Mammary epithelial cell (primary cell): ENCODE measurements at regions of chr2 and their contacts with region 1.

Region 1: GRCh38 chr2:187541086-187542085 is 12.8 kb downstream of the TFPI start:
- DNase-seq: no peak
- H3K4me3 ChIP-seq: no peak overlapping the region
- H3K27ac ChIP-seq: peak overlapping the region; percentile 11
- H3K4me1 ChIP-seq: peaks cover 11% of the 10 kb centered on the region
- H3K27me3 ChIP-seq: no peaks in the 10 kb centered on the region
- CTCF ChIP-seq: no peak

Region 2: GRCh38 chr2:186365406-186365805 is 1176.0 kb before region 1 on chr2:
- CTCF ChIA-PET with region 1: no interaction called
- dilution Hi-C with region 1: no loop called
- in situ Hi-C with region 1: no loop called
- intact Hi-C with region 1: no loop called
- DNase-seq: no peak
- H3K4me3 ChIP-seq: no peak overlapping the region
- H3K27ac ChIP-seq: no peak overlapping the region
- H3K4me1 ChIP-seq: no peaks in the 10 kb centered on the region
- H3K27me3 ChIP-seq: no peaks in the 10 kb centered on the region
- CTCF ChIP-seq: no peak

Region 3: DNA sequence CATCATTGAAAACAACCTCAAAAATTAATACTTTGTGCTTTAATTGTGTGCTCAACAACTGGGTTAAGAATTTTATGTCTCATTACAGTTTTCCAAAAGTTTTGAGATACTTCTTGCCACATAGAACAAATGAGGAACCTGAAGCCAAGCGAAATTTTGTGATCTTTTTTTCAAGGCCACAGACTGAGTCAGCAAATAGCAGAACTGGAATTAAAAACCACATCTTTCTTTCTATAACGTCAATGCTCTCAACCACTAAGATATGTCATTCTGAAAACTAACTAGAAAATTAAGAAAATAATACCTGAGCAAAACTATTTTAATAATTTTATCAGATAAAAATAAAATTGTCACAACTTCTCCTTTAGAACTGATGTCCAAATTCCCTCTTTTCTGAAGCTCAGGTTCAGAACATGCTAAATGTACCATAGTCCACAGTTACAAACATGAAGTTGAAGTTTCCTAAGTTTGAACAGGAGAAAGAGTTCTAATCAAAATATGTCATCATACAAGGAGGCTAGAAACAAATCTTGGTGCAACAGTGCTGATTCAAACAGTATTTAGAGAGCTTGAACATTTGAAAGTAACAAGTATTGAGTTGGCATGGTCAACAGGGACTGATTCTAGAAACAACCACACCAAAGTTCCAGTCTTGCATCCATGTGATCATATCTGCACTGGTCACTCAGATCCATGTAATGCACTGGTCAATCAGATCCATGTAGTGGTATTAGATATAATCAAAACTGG is 65.7 kb before region 1 on chr2:
- CTCF ChIA-PET with region 1: no interaction called
- dilution Hi-C with region 1: no loop called
- in situ Hi-C with region 1: no loop called
- intact Hi-C with region 1: no loop called
- DNase-seq: no peak
- H3K4me3 ChIP-seq: no peak overlapping the region
- H3K27ac ChIP-seq: no peak overlapping the region
- H3K4me1 ChIP-seq: peaks cover 3% of the 10 kb centered on the region
- H3K27me3 ChIP-seq: no peaks in the 10 kb centered on the region
- CTCF ChIP-seq: no peak

Region 4: GRCh38 chr2:187658952-187659525 is 117.7 kb after region 1 on chr2:
- CTCF ChIA-PET with region 1: interaction called, 15 read pairs
- dilution Hi-C with region 1: no loop called
- in situ Hi-C with region 1: no loop called
- intact Hi-C with region 1: no loop called
- DNase-seq: peak; percentile 4
- H3K4me3 ChIP-seq: no peak overlapping the region
- H3K27ac ChIP-seq: no peak overlapping the region
- H3K4me1 ChIP-seq: no peaks in the 10 kb centered on the region
- H3K27me3 ChIP-seq: no peaks in the 10 kb centered on the region
- CTCF ChIP-seq: peak; percentile 19 to 57